ENCODE measurements at regions of chr16 and their contacts with region 1.

Region 1: GRCh38 chr16:30805370-30806169 is 18.6 kb upstream of the ZNF629 start:
- DNase-seq: peak; percentile 96
- H3K4me3 ChIP-seq: peak overlapping the region; percentile 69 to 77
- H3K27ac ChIP-seq: peak overlapping the region; percentile 82 to 89
- H3K4me1 ChIP-seq: peaks cover 3 to 7% of the 10 kb centered on the region in 2 experiments; a peak in 1 of 4 replicates
- H3K27me3 ChIP-seq: no peaks in the 10 kb centered on the region
- CTCF ChIP-seq: peak; percentile 23; the same call in 1 of the 2 replicates
- EP300 ChIP-seq: peak in 1 of 2 experiments; percentile 22; a peak in 1 of 4 replicates
- RAD21 ChIP-seq: no peak; the same call in 1 of the 2 replicates

Region 2: DNA sequence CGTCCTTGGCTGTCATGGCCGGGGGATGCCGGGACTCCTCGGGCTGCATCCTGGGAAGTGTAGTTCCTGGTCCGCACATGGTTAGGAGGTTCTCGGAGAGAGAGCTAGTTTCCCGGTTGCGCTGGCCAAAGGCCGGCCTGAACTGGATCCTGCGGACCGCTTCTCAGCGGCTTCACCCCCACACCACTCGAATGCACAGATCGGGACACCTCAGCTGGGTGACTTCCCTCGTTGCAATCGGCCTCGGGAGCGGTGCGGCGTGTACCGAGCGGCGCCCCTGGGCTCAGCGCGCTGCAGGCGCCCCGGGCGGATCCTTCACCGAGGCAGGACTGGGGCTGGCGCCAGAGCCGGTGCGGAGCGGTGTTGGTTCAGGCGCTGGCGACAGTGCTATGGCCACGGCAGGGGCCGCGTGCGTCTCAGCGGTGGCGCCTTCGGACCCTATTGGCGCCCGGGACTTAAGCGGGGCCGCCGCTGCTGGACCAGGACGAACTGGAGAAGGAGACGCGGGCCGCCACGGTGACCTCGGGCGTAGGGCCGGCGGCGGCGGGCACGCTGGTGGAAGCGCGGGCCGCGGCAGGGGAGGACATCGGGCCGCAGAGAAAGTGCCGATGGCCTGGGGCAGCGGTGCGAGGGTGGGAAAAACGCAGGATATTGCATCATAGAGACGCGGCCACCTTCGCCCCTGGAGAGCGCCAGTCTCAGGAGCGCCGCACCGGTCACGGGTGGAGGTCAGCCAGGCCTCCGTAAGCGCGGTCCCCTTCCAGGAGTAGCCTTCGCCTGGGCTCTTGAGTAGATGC is 30.0 kb before region 1 on chr16:
- CTCF ChIA-PET with region 1: interaction called, 3 read pairs
- POLR2A ChIA-PET with region 1: interaction called, 10 read pairs
- DNase-seq: peak; percentile 96
- H3K4me3 ChIP-seq: peak overlapping the region; percentile 67 to 84
- H3K27ac ChIP-seq: peak overlapping the region; percentile 72 to 89
- H3K4me1 ChIP-seq: peaks cover 12 to 29% of the 10 kb centered on the region in 2 experiments; a peak in 3 of 4 replicates
- H3K27me3 ChIP-seq: no peaks in the 10 kb centered on the region
- CTCF ChIP-seq: no peak
- EP300 ChIP-seq: 0 out of 4 replicates have a peak, but pooled peaks of 1 of the 2 experiments have one; percentile 13
- RAD21 ChIP-seq: no peak

Region 3: DNA sequence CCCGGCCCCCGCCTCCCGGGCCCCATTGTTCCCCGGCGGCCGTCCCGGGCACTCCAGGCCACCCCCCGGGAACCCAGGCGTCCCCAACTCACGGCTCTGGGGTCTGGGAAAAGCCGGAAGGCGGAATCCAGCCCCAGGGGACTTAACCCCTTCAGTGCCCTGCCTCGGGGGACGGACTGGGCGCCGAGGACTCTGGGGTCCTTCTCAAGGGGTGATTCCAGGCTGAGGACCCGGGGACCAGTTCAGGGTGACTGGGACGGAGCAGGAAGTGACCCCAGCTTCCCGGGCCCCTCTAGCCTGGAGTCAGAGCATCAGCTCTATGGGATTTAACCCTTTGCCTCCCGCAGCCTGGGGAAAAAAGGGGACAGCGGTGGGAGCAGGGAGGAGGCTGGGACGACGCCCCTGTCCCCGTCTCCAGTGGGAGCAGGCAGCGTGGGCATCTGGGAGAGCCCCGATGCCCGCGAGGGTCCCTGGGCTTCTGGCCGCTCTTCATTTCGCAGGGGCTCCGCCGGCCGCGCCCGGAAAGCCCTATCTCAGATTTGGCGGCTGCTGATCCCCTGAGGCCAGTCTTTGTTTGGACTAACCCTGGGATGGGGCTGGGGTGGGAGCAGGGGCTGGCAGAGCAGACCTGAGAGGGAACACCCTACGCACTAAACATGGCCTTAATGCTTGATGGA is 18.5 kb before region 1 on chr16 and contains the start of gene ZNF629:
- CTCF ChIA-PET with region 1: interaction called, 19 read pairs
- POLR2A ChIA-PET with region 1: interaction called, 128 read pairs
- DNase-seq: peak; percentile 97
- H3K4me3 ChIP-seq: peak within 1 kb of the TSS; percentile 82 to 86
- H3K27ac ChIP-seq: peak within 1 kb of the TSS; percentile 63 to 92
- H3K4me1 ChIP-seq: peaks cover 6 to 17% of the 10 kb centered on the region in 2 experiments; a peak in 2 of 4 replicates
- H3K27me3 ChIP-seq: no peaks in the 10 kb centered on the region
- CTCF ChIP-seq: no peak
- EP300 ChIP-seq: no peak
- RAD21 ChIP-seq: no peak
- polyA plus RNA-seq, gene ZNF629: 4.7 and 5.1 TPM in 2 replicates

Region 4: GRCh38 chr16:30874821-30875717 is 69.5 kb after region 1 on chr16:
- CTCF ChIA-PET with region 1: interaction called, 8 read pairs
- POLR2A ChIA-PET with region 1: interaction called, 30 read pairs
- DNase-seq: peak; percentile 93
- H3K4me3 ChIP-seq: peak overlapping the region; percentile 75 to 94
- H3K27ac ChIP-seq: peak overlapping the region; percentile 83 to 92
- H3K4me1 ChIP-seq: peaks cover 6 to 7% of the 10 kb centered on the region in 2 experiments; a peak in 2 of 4 replicates
- H3K27me3 ChIP-seq: no peaks in the 10 kb centered on the region
- CTCF ChIP-seq: no peak
- EP300 ChIP-seq: no peak; a peak in 1 of 4 replicates
- RAD21 ChIP-seq: no peak